Dendritic cell treated with granulocyte-macrophage colony-stimulating factor and Interleukin-4, amounts not matched to agents 40 ng/mL and 50 ng/mL, for 4 days (primary cell): ENCODE measurements at regions of chr2 and their contacts with region 1.

Region 1: GRCh38 chr2:119407430-119408220 is 24.0 kb upstream of the TMEM37 start:
- H3K4me3 Mint-ChIP-seq: no peak overlapping the region
- H3K27ac Mint-ChIP-seq: peak overlapping the region; percentile 68
- H3K4me1 Mint-ChIP-seq: peaks cover 14% of the 10 kb centered on the region
- H3K27me3 Mint-ChIP-seq: peaks cover 15% of the 10 kb centered on the region

Region 2: GRCh38 chr2:118913803-118914645 is 493.6 kb before region 1 on chr2:
- intact Hi-C with region 1: no loop called
- H3K4me3 Mint-ChIP-seq: no peak overlapping the region
- H3K27ac Mint-ChIP-seq: peak overlapping the region; percentile 59
- H3K4me1 Mint-ChIP-seq: peaks cover 38% of the 10 kb centered on the region
- H3K27me3 Mint-ChIP-seq: peaks cover 19% of the 10 kb centered on the region

Region 3: DNA sequence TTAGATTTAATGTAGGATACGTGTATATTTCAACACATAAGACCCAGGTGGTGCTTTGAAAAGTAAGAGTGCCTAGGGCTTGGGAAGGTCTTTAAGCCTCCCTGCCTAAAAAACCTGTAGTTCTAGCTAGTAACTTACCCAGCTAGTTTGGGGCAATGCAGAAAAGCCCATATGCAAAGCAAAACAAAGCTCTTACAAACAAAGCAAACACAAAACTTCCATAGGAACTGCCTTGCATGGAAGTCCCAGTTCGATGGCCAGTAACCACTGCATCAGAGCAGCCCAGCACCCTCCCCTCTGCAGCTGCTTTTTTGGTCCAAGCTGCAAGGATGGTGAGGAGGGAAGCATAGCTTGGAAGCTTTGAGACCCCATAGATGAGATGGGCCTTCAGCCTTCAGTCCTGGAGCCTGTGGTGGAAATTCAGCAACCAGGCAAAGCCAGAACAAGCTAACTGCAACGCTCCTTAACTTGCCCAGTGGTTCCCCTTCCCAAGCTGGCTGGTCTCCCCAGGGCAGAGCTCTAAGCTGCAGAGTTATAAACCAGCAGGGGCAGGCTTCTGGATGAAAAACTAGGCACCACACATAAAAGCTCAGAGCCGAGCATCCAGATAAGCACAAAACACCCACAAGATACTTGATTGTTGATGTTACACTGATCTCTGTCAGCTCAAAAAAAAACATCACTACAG is 57.2 kb before region 1 on chr2:
- intact Hi-C with region 1: no loop called
- H3K4me3 Mint-ChIP-seq: no peak overlapping the region
- H3K27ac Mint-ChIP-seq: no peak overlapping the region
- H3K4me1 Mint-ChIP-seq: peaks cover under 1% of the 10 kb centered on the region
- H3K27me3 Mint-ChIP-seq: no peaks in the 10 kb centered on the region

Region 4: DNA sequence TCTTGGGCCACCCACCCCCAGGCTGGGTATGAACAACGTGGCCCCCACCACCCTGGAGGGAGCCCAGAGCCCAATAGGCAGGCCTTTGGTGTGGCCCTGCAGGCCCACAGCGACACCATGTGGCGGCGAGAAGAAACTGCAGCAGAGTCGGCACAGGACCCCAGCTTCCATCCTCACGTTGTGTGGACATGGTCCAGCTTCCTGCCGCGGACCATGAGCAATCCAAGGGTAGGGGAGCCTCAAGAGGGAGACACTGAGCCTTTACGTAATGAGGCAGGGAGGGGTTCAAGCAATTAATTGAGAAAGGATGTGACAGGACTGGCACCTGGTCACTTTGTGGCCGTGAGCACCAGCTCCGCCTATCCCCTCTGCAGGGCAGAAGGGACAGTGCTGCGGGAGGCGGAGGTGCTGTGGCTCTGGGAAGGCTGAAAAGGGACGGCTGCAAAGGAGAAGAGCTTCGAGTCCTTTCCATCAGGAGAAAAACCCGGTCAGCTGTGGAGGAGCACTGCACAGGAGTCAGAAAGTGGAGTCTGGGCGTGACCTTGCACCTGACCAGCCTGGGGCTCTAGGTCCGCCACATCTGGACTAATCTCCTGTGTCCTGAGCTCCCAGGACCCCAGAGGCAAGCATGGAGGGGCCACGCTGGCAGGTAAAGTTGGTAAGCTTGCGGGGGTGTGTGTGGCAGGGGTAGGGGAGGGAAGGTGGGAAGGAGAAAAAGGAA is 68.8 kb after region 1 on chr2:
- intact Hi-C with region 1: loop called (anchors 1 kb)
- H3K4me3 Mint-ChIP-seq: no peak overlapping the region
- H3K27ac Mint-ChIP-seq: no peak overlapping the region
- H3K4me1 Mint-ChIP-seq: peaks cover 10% of the 10 kb centered on the region
- H3K27me3 Mint-ChIP-seq: peaks cover 32% of the 10 kb centered on the region